ENCODE measurements at regions of chr5 and their contacts with region 1.

Region 1: DNA sequence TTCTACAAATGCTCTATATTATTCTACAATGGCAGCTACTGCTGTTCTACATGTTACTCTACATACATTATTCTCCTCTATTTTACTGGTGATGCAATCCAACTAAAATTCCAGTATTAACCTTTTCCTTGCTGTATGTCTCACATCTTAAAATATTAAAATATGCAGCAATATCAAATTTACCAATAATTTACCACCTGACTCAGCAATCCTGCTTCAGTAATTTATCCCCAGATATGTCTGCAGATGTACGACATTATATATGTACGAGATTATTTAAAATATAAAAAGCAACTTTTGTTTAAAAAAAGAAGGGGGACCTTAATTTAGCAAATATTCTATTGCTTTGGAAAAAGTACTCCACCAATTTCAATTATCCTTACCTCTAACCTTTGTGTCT is 11.6 kb downstream of the KIF3A start:
- DNase-seq: no peak
- ATAC-seq: no peak
- H3K4me3 Mint-ChIP-seq: no peak overlapping the region
- H3K27ac Mint-ChIP-seq: no peak overlapping the region
- H3K4me1 Mint-ChIP-seq: peaks cover 5% of the 10 kb centered on the region
- H3K27me3 Mint-ChIP-seq: no peaks in the 10 kb centered on the region
- CTCF ChIP-seq: no peak

Region 2: GRCh38 chr5:132714456-132715307 is 11.1 kb before region 1 on chr5:
- CTCF ChIA-PET with region 1: interaction called, 12 read pairs
- POLR2A ChIA-PET with region 1: no interaction called
- intact Hi-C with region 1: no loop called
- DNase-seq: no peak
- ATAC-seq: peak; percentile 53
- H3K4me3 Mint-ChIP-seq: no peak overlapping the region
- H3K27ac Mint-ChIP-seq: no peak overlapping the region
- H3K4me1 Mint-ChIP-seq: peaks cover 15% of the 10 kb centered on the region
- H3K27me3 Mint-ChIP-seq: no peaks in the 10 kb centered on the region
- CTCF ChIP-seq: peak; percentile 61

Region 3: GRCh38 chr5:132777209-132778069 is 51.7 kb after region 1 on chr5 and contains the start of gene SEPTIN8:
- CTCF ChIA-PET with region 1: no interaction called
- POLR2A ChIA-PET with region 1: no interaction called
- intact Hi-C with region 1: no loop called
- DNase-seq: peak; percentile 52
- ATAC-seq: peak; percentile 74
- H3K4me3 Mint-ChIP-seq: peak within 1 kb of the TSS; percentile 67
- H3K27ac Mint-ChIP-seq: no peak within 1 kb of the TSS
- H3K4me1 Mint-ChIP-seq: peaks cover 8% of the 10 kb centered on the region
- H3K27me3 Mint-ChIP-seq: peaks cover 20% of the 10 kb centered on the region
- CTCF ChIP-seq: no peak
- total RNA-seq, gene SEPTIN8: 25.2 to 27.1 TPM

Region 4: GRCh38 chr5:132866342-132867045 is 140.7 kb after region 1 on chr5 and contains the starts of genes GDF9 and UQCRQ:
- CTCF ChIA-PET with region 1: no interaction called
- POLR2A ChIA-PET with region 1: no interaction called
- intact Hi-C with region 1: no loop called
- DNase-seq: peak; percentile 95
- ATAC-seq: peak; percentile 99
- H3K4me3 Mint-ChIP-seq: peak within 1 kb of the TSS; percentile 97
- H3K27ac Mint-ChIP-seq: peak within 1 kb of the TSS; percentile 100
- H3K4me1 Mint-ChIP-seq: peaks cover 29% of the 10 kb centered on the region
- H3K27me3 Mint-ChIP-seq: no peaks in the 10 kb centered on the region
- CTCF ChIP-seq: no peak
- total RNA-seq, gene GDF9: 0.90 to 0.94 TPM
- total RNA-seq, gene UQCRQ: 558 to 566 TPM

Region 5: DNA sequence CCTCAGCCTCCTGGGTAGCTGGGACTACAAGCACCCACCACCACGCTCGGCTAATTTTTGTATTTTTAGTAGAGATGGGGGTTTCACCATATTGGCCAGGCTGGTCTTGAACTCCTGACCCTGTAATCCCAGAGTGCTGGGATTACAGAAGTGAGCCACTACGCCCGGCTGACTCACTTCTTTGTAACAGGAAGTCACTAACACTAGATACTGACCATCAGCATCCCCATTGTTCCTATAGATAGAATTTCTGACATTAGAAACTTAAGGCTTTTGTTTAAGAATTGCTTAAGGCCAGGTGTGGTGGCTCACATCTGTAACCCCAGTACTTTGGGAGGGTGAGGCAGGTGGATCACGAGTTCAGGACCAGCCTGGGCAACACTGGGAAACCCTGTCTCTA is 189.9 kb after region 1 on chr5:
- CTCF ChIA-PET with region 1: no interaction called
- POLR2A ChIA-PET with region 1: no interaction called
- intact Hi-C with region 1: no loop called
- DNase-seq: no peak
- ATAC-seq: no peak
- H3K4me3 Mint-ChIP-seq: no peak overlapping the region
- H3K27ac Mint-ChIP-seq: no peak overlapping the region
- H3K4me1 Mint-ChIP-seq: peaks cover 4% of the 10 kb centered on the region
- H3K27me3 Mint-ChIP-seq: no peaks in the 10 kb centered on the region
- CTCF ChIP-seq: no peak

Measured in activated CD8-positive, alpha-beta T cell treated with anti-CD3 and anti-CD28 coated beads for 36 hours (primary cell).